ENCODE measurements at regions of chr7 and their contacts with region 1.

Region 1: GRCh38 chr7:6323967-6324701 is 51.7 kb upstream of the CYTH3 start:
- DNase-seq: no peak
- H3K27ac ChIP-seq: no peak overlapping the region
- CTCF ChIP-seq: no peak

Region 2: GRCh38 chr7:6346581-6346980 is 22.4 kb after region 1 on chr7:
- CTCF ChIA-PET with region 1: interaction called, 4 read pairs
- POLR2A ChIA-PET with region 1: interaction called, 11 read pairs
- DNase-seq: no peak
- H3K27ac ChIP-seq: no peak overlapping the region; the same call in 1 of the 2 replicates
- CTCF ChIP-seq: no peak

Region 3: DNA sequence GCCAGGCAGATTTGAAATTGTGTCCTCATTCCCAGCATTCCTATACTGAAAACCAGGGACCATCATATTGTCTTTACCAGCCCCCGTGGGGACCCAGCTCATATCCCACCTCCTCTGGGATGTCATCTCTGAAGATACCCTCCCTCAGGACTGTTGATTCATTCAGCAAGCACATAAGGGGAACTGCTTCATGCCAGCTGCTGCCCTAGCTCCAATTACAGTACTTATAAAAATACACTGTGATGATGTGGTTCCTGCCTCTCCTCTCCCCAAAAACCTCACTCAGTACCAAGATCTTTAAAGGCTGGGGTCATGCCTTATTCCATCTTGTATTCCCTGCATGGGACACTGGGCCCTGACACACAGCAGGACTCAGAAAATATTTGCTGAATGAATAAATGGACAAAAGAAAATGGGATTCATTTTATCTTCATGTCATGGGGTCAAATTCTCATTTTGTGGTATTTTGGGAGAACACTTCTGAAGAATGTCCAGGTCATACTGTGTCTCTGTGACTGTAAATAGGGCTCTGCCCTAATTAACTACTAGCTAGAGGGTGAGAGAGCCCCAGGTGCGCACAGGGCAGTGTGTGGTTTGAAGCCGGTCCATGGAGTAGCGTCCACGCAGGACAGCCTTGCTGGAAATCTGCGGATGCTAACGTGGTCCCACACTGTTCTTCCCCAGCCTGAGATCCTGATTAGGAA is 152.6 kb after region 1 on chr7:
- CTCF ChIA-PET with region 1: no interaction called
- POLR2A ChIA-PET with region 1: no interaction called
- DNase-seq: no peak
- H3K27ac ChIP-seq: no peak overlapping the region
- CTCF ChIP-seq: no peak